Head of caudate nucleus (tissue), 42 donors: ENCODE measurements at regions of chr10 and their contacts with region 1.

Region 1: GRCh38 chr10:65501259-65501658 is 1424.6 kb upstream of the LRRTM3 start:
- DNase-seq: no peak

Region 2: DNA sequence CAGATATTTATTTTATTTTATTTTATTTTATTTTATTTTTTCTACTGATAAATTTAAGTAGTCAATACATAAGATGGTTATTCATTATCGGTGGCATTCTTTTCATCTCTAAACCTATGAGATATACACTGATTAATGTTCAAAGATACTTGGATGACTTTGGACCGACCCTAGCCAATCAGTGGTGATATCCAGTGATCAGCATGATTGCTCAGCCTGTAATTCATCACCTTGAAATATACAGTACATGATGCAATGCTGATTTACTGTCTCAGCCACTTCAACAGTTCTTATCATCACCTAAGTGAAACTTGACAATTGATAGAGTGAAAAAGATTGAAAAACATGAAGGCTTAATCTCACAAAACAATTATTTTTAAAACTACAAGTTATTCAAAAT is 329.0 kb before region 1 on chr10:
- intact Hi-C with region 1: loop called (anchors 5 kb)
- DNase-seq: no peak

Region 3: DNA sequence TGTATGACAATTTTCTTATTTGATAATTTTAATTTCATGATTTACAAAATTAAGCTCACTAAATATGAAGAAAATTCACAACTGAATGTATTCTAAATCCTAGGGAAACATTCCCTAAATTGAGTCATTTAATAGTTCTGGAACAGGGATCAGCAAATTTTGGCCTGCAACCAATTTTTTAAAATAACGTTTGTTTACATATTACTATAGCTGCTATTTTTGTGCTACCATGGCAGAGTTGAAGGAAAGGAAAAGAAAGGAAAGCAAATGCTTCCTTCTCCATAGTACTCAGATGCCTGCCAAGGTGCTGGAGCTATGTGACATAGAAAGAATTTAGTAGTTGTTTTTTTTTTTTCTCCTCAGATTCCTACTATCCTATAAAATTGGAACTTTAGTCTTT is 116.9 kb after region 1 on chr10:
- intact Hi-C with region 1: no loop called
- DNase-seq: no peak